Prostate gland (tissue), 2 donors: ENCODE measurements at regions of chr4 and their contacts with region 1.

Region 1: GRCh38 chr4:6986781-6987587 is 56.2 kb upstream of the TADA2B start:
- DNase-seq: peak; percentile 96
- H3K4me3 ChIP-seq: peak overlapping the region; percentile 54 to 74
- H3K27ac ChIP-seq: peak overlapping the region; percentile 93 to 96
- H3K4me1 ChIP-seq: peaks cover 15% of the 10 kb centered on the region
- H3K27me3 ChIP-seq: no peaks in the 10 kb centered on the region
- CTCF ChIP-seq: peak in 1 of 4 experiments; percentile 28
- POLR2A ChIP-seq: peak; percentile 68

Region 2: DNA sequence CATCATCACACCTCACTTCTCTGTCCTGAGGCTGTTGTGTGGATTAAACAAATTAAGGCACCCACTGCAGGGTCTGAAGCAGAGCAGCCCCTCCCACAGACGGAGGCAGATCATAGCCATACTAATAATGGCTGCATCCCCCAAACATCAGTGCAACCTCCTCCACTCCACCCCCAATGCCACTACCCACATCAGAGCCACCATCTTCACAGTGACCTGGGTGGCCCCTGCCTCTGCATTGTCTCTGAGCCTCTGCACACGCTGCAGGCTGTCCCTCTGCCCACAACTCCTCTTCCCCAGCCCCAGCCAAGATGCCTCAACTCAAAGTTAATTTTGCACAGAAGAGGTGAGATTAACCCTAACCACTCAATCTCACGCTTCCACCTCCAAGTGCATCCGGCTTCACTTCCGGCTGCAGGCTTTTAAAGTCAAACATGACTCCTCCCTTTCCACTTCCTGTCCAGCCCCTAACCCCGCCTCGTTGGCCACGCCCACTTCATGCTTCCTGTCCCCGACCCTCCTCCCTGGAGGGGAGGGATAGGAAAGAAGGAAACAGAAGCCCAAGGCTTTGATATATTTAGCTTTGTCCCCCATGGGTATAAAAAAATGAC is 809.3 kb before region 1 on chr4:
- intact Hi-C with region 1: no loop called
- DNase-seq: no peak
- H3K4me3 ChIP-seq: no peak overlapping the region
- H3K27ac ChIP-seq: no peak overlapping the region
- H3K4me1 ChIP-seq: no peaks in the 10 kb centered on the region
- H3K27me3 ChIP-seq: no peaks in the 10 kb centered on the region
- CTCF ChIP-seq: no peak
- POLR2A ChIP-seq: no peak

Region 3: GRCh38 chr4:6909073-6909965 is 77.7 kb before region 1 on chr4 and contains the start of gene TBC1D14:
- intact Hi-C with region 1: loop called (anchors 2 kb)
- DNase-seq: peak; percentile 84
- H3K4me3 ChIP-seq: peak within 1 kb of the TSS; percentile 88 to 97
- H3K27ac ChIP-seq: peak within 1 kb of the TSS; percentile 99
- H3K4me1 ChIP-seq: peaks cover 11% of the 10 kb centered on the region
- H3K27me3 ChIP-seq: no peaks in the 10 kb centered on the region
- CTCF ChIP-seq: peak in 2 of 4 experiments; percentile 52 to 64
- POLR2A ChIP-seq: peak; percentile 35
- total RNA-seq, gene TBC1D14: 56.2 to 90.5 TPM

Region 4: DNA sequence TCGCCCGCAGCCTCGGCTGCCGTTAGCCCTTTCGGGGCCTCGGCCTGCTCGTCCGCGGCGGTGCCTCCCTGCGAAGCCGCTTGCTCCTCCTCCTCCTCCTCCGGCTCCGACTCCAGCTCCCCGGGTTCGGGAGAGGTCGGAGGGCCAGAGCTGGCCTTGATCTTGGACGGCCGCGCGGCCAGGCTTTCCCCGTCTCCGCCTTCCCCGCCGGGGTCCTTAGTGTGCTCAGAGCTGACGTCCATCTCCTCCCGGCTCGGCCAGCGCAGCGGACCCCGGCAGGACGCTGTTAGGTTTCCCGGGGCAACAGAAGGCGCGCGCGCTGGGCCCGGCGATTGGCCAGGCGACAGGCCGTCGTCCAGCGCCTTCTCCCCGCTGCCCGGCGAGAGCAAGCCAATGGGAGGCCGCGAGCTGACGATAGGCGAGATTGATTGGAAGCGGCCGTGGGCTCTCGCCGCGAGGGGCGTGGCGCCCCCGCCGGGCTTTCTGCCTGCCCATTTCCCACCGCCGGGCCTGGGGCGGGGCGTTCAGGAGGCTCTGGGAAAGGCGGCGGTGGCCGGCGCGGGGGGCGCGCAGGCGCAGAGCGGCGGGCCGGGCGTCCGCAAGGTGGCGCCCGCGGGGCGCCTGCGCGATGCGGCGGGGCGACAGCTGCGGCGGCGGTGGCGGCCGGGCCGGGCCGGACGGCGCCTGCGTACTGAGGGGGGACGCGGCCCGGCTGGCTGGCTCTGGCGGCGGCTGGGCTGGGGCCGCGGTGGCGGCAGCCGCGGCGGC is 55.9 kb after region 1 on chr4 and contains the start of gene TADA2B:
- intact Hi-C with region 1: loop called (anchors 5 kb)
- DNase-seq: peak; percentile 97
- H3K4me3 ChIP-seq: peak within 1 kb of the TSS; percentile 82 to 95
- H3K27ac ChIP-seq: peak within 1 kb of the TSS; percentile 86 to 91
- H3K4me1 ChIP-seq: peaks cover 28% of the 10 kb centered on the region
- H3K27me3 ChIP-seq: no peaks in the 10 kb centered on the region
- CTCF ChIP-seq: peak; percentile 24 to 90 (median 63)
- POLR2A ChIP-seq: peak; percentile 49
- total RNA-seq, gene TADA2B: 34.5 to 41.2 TPM

Region 5: DNA sequence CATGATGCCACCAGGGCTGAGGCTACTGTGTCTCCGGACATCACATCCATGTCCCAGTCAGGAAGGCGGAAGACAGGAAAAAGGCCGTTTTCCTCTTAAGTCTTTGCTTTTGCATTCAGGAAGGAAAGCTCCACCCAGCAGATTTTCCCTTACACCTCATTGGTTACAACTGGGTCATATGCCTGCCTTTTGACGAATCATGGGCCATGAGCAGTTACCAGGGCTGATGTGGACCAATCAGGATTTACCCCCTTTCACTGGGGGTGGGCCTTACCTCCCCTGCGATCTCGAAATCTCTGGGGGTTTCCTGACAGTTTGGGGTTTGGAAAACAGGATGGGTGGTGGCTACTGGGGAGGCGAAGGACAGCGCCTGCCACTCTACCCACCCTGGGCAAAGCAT is 133.4 kb after region 1 on chr4:
- intact Hi-C with region 1: no loop called
- DNase-seq: no peak
- H3K4me3 ChIP-seq: no peak overlapping the region
- H3K27ac ChIP-seq: no peak overlapping the region
- H3K4me1 ChIP-seq: no peaks in the 10 kb centered on the region
- H3K27me3 ChIP-seq: no peaks in the 10 kb centered on the region
- CTCF ChIP-seq: no peak
- POLR2A ChIP-seq: no peak